ENCODE measurements at regions of chr2 and their contacts with region 1.

Region 1: DNA sequence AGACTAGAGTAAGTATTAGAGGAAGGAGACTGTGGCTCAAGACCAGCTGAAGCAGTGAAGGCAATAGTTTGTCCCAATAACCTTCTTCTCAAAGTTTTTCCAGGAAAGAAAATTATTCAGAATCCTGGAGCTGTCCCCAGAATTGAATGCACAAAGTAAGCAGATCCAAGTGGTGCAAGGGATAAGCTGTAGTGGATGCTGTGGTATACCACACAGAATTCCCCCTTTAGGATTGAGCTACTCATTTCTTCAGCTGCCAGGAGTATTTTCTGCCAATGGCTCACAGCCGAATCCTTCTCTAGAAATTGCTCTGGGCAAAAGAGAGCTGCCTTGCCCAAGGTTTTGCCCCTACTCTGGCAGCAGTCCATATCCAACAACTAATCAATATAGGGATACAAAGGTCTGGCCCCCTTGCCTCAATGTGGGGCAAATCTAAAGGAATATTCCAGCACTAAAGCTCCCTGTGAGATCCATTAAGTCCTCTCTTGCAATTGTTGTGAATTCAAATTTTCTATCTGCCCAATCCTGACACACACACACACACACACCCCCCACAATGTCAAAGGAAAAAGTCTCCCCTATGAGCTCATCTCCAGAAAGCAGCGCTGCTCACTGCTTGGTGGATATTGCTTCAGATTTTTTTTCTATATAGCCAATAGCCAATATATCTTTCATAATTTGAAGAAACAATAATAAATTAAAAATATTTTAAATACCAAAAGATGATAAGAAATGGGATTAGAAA is 18.4 kb upstream of the TCF7L1 start:
- DNase-seq: no peak
- ATAC-seq: no peak
- H3K4me3 Mint-ChIP-seq: no peak overlapping the region
- H3K27ac Mint-ChIP-seq: no peak overlapping the region
- H3K4me1 Mint-ChIP-seq: no peaks in the 10 kb centered on the region
- H3K27me3 Mint-ChIP-seq: peaks cover 13% of the 10 kb centered on the region

Region 2: GRCh38 chr2:84579661-84580060 is 535.1 kb before region 1 on chr2:
- CTCF ChIA-PET with region 1: no interaction called
- POLR2A ChIA-PET with region 1: no interaction called
- intact Hi-C with region 1: no loop called
- DNase-seq: no peak
- ATAC-seq: no peak
- H3K4me3 Mint-ChIP-seq: no peak overlapping the region
- H3K27ac Mint-ChIP-seq: no peak overlapping the region
- H3K4me1 Mint-ChIP-seq: peaks cover 14% of the 10 kb centered on the region
- H3K27me3 Mint-ChIP-seq: no peaks in the 10 kb centered on the region

Region 3: GRCh38 chr2:85089585-85089984 is 25.2 kb before region 1 on chr2:
- CTCF ChIA-PET with region 1: no interaction called
- POLR2A ChIA-PET with region 1: no interaction called
- intact Hi-C with region 1: no loop called
- DNase-seq: no peak
- ATAC-seq: no peak
- H3K4me3 Mint-ChIP-seq: no peak overlapping the region
- H3K27ac Mint-ChIP-seq: no peak overlapping the region
- H3K4me1 Mint-ChIP-seq: no peaks in the 10 kb centered on the region
- H3K27me3 Mint-ChIP-seq: no peaks in the 10 kb centered on the region

Region 4: DNA sequence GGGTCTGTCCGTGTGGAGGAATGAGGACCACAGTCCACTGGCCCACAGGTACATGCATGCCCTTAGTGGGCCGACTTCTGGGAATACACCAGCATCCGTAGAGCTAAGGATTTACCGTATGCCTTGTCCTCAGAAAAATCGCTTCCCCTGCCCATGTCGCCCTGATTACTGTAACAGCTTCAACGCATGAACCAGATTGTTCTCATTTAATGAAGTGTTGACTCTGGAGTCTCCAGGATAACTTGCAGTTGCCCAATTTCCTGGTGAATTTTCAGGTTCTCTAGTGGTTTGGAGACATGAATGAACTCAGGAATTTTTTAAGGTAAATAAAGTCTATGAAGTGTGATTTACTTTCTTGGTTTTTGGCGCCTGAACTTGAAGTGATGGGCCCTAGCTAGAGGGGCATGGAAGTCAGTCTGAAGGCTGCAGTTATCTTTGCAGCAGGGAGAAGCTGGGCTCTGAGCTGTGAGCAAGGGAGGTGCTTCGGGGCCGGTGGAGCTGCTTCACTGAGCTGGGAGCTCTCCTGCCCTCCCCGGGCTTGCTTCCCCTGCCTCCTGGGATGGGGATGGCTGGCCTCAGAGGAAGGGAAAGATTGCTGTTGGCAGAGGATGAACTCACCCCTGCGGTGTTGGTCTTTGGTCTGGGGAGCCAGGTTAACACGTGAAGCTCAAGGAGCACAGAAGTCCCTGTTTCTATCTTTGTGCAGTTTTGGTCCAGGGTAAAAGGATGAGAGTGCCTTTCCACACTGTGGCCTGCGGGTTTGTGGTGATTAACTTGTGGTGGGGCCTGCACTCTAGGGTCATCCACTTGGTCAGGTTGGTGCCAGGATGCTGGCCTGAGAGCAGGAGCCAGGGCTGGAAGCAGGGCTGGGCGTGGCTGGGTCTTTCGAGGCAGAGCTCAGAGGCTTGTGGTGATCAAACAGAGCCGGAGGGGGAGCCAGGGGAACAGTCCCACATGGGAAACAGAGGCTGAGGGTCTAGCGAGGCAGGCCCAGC is 46.5 kb after region 1 on chr2:
- CTCF ChIA-PET with region 1: no interaction called
- POLR2A ChIA-PET with region 1: no interaction called
- intact Hi-C with region 1: loop called in 1 of 2 experiments (anchors 2 kb)
- DNase-seq: no peak
- ATAC-seq: no peak
- H3K4me3 Mint-ChIP-seq: no peak overlapping the region
- H3K27ac Mint-ChIP-seq: no peak overlapping the region
- H3K4me1 Mint-ChIP-seq: no peaks in the 10 kb centered on the region
- H3K27me3 Mint-ChIP-seq: peaks cover 2% of the 10 kb centered on the region

Measured in activated CD4-positive, alpha-beta T cell treated with anti-CD3 and anti-CD28 coated beads for 36 hours (primary cell).